Activated naive CD4-positive, alpha-beta T cell treated with anti-CD3 and anti-CD28 coated beads for 36 hours (primary cell): ENCODE measurements at regions of chr2 and their contacts with region 1.

Region 1: DNA sequence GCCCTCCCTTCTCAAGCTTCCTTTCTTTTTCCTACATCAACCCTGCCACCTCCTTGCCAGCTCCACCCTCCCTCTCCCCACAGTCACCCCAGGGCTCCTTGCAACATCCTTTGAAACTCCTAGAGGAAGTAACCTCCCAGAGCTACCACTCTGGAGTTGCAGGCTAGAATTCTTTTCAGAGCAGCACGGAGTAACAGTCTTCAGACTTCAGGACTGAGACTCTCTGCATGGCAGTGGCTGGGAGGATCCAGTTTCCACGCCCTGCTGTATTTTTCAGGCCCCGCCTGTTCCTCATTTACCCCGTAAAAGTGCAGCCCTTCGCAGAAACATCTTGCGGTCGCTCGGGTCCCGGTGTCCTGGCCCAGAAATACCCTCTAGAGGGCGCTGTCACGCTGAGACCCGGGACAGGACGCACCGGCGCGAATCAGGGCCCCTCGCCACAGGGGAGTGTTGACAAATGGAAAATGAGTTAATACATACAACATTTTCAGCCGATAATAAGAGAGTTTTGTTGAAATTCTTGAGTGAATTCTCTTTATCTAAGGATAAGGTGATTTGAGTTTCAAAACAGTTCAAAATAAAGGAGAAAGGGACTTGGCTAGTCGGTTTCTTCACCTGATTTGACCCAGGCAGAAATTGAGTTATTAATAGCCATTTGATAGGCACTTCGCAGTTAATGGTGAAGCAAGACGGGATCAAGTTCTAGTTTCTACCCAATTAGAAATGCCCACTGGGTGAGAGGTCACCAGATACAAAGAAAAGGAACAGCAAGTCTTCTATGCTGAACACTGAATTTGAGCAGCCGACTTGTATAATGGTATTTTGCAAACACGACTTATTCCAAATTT is 18.5 kb upstream of the NTSR2 start:
- DNase-seq: peak; percentile 89
- H3K4me3 Mint-ChIP-seq: peak overlapping the region; percentile 32
- H3K27ac Mint-ChIP-seq: no peak overlapping the region
- H3K4me1 Mint-ChIP-seq: peaks cover 10% of the 10 kb centered on the region
- H3K27me3 Mint-ChIP-seq: peaks cover 5% of the 10 kb centered on the region

Region 2: GRCh38 chr2:10188216-10188615 is 1500.2 kb before region 1 on chr2:
- CTCF ChIA-PET with region 1: no interaction called
- intact Hi-C with region 1: no loop called
- DNase-seq: no peak
- H3K4me3 Mint-ChIP-seq: no peak overlapping the region
- H3K27ac Mint-ChIP-seq: no peak overlapping the region
- H3K4me1 Mint-ChIP-seq: no peaks in the 10 kb centered on the region
- H3K27me3 Mint-ChIP-seq: no peaks in the 10 kb centered on the region

Region 3: DNA sequence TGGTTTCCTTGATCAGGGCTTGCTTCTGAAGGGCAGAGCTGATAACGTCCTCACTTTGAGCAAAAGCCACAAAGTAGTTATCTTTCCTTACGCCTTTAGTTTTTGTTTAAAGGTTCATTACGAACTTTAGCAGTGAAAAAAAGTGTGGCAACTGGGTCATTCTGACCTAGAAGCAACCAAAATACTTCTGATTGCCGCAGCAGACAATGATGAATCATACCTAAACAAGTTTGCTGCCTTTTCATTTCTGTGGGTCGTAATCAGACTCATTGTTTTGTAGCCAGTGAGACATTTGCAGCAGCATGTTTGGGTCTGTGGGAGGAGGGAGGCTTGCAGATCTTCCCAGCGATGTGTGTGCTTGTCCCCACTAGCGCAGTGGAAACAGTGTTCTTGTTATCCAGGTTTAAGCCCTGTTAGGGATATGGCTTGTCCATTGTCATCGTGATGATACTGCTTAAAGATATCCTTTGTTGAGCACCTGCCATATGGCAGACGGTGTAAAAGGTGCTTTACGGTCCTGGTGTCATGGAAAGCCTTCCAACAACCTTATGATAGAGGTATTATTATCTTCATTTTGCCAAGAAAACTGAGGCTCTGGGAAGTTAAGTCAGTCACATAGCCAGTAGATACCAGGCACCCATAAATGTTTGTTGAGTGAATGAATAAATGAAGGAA is 155.9 kb before region 1 on chr2:
- CTCF ChIA-PET with region 1: no interaction called
- intact Hi-C with region 1: no loop called
- DNase-seq: no peak
- H3K4me3 Mint-ChIP-seq: no peak overlapping the region
- H3K27ac Mint-ChIP-seq: no peak overlapping the region
- H3K4me1 Mint-ChIP-seq: no peaks in the 10 kb centered on the region
- H3K27me3 Mint-ChIP-seq: peaks cover 23% of the 10 kb centered on the region

Region 4: GRCh38 chr2:11701751-11702301 is 13.4 kb after region 1 on chr2:
- CTCF ChIA-PET with region 1: interaction called, 29 read pairs
- intact Hi-C with region 1: no loop called
- DNase-seq: no peak
- H3K4me3 Mint-ChIP-seq: no peak overlapping the region
- H3K27ac Mint-ChIP-seq: no peak overlapping the region
- H3K4me1 Mint-ChIP-seq: no peaks in the 10 kb centered on the region
- H3K27me3 Mint-ChIP-seq: no peaks in the 10 kb centered on the region

Region 5: DNA sequence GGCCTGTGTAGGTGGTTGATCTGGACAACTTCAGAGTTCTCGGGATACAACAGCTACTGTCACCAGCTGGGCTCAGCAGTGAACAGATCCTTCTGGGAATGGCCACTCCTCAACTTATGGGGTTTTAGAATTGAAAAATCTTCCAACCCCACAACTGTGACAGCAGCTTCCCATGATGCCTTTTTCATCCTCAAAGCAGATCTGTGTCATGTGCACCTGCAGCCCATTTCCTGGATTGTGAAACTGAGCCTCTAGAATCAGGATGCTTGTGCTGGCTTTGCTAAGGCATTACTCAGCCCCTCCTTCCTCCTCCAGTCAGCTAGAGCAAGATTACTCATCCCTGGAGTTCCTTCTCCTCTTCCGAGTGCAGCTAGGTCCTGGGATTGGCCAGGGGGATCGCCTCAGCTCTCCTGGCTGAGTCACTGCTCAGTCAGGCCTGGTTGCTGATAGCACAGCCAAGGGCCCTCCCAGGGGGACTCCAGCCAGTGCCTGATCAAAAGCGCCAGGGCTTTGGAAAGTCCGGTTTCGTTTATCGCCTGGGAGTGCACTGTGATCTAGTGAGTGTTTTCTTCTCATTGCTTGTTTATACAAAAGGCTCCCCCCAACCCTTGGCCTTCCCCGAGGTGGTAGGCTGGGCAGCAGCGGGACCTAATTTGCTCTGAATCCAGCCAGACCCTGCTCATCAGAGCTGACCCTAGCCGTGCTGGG is 55.6 kb after region 1 on chr2:
- CTCF ChIA-PET with region 1: interaction called, 11 read pairs
- intact Hi-C with region 1: loop called (anchors 1 kb)
- DNase-seq: peak; percentile 92
- H3K4me3 Mint-ChIP-seq: no peak overlapping the region
- H3K27ac Mint-ChIP-seq: peak overlapping the region; percentile 69
- H3K4me1 Mint-ChIP-seq: peaks cover 47% of the 10 kb centered on the region
- H3K27me3 Mint-ChIP-seq: no peaks in the 10 kb centered on the region

Region 6: DNA sequence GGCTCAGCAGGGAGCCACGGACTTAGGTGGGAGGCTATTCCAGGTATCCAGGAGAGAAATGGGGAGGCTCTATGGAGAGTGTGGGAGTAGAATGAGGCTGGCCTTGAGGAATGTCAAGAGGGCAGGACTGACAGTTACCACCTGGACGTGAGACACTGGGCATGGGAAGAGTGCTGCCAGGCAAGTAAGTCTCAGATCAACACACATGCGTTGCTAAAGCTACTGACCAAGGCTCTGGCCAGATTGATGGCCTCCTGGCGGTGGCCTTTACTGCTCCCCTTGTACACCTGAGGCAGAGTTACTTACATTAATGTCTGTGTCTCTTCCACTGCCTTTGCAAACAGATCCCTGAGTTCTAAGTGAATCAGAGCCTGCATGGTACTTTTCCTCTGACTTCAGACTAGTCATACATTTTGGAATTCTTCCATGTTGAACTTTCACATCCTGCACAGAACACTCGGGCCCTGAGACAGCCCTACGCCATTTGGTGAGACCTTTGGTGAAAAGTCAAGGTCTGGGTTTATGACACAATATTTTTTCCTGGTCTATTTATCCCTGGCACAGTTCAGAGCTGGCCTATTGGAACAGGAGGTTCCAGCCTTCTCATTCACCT is 629.5 kb after region 1 on chr2:
- CTCF ChIA-PET with region 1: no interaction called
- intact Hi-C with region 1: no loop called
- DNase-seq: no peak
- H3K4me3 Mint-ChIP-seq: no peak overlapping the region
- H3K27ac Mint-ChIP-seq: no peak overlapping the region
- H3K4me1 Mint-ChIP-seq: peaks cover 17% of the 10 kb centered on the region
- H3K27me3 Mint-ChIP-seq: no peaks in the 10 kb centered on the region